ENCODE measurements at regions of chr16 and their contacts with region 1.

Region 1: DNA sequence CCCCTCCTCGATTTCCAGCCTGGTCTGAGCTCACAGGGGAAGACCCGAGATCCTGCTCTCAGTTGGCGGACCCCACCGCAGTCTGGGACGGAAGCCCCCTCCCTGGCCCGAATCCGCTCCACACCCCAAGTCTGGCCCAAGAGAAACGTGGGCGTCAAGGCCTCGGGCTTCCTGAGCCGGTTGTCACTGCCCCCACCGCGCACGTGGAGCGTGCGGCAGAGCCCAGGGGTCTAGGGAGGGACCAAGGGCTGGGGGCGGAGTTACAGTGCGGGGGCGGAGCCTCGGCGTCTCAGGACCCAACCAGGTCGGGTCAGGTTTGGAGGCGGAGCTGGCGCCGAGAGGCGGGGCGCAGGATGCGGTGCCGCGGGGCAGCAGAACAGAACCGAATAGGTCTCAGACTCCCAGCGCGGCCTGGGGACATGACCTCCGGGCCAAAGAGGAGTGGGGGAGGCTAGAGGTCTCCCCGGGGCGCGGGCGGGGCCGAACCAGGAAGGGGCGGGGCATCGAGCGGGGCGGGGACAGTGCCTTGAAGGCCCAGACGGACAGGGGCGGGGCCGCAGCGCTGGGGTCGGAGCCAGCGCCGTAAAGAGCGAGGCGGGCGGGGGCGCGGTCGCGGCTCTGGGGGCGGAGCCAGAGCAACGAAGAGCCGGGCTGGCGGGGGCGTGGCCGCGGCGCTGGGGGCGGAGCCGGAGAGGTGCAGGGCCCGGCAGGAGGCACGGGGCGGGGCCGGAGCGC is 431 bp upstream of the ZFPM1 start:
- DNase-seq: peak; percentile 100
- H3K4me3 Mint-ChIP-seq: peak overlapping the region; percentile 88
- H3K27ac Mint-ChIP-seq: peak overlapping the region; percentile 85
- H3K4me1 Mint-ChIP-seq: peaks cover 27% of the 10 kb centered on the region
- H3K27me3 Mint-ChIP-seq: peaks cover 11% of the 10 kb centered on the region

Region 2: GRCh38 chr16:87387942-87388817 is 1064.5 kb before region 1 on chr16:
- intact Hi-C with region 1: loop called (anchors 10 kb)
- DNase-seq: peak; percentile 96
- H3K4me3 Mint-ChIP-seq: peak overlapping the region; percentile 44
- H3K27ac Mint-ChIP-seq: peak overlapping the region; percentile 96
- H3K4me1 Mint-ChIP-seq: peaks cover 40% of the 10 kb centered on the region
- H3K27me3 Mint-ChIP-seq: peaks cover 2% of the 10 kb centered on the region

Region 3: DNA sequence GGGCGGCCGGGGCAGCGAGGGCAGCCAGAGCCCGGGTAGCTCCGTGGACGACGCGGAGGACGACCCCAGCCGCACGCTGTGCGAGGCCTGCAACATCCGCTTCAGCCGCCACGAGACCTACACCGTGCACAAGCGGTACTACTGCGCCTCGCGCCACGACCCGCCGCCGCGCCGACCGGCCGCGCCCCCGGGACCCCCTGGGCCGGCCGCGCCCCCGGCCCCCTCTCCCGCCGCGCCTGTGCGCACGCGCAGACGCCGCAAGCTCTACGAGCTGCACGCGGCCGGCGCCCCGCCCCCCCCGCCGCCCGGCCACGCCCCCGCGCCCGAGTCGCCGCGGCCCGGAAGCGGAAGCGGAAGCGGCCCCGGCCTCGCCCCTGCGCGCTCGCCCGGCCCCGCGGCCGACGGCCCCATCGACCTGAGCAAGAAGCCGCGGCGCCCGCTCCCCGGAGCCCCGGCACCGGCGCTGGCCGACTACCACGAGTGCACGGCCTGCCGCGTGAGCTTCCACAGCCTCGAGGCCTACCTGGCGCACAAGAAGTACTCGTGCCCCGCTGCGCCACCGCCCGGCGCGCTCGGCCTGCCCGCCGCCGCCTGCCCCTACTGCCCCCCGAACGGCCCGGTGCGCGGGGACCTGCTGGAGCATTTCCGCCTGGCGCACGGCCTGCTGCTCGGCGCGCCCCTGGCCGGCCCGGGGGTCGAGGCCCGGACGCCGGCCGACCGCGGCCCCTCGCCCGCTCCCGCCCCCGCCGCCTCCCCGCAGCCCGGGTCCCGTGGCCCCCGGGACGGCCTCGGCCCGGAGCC is 81.5 kb after region 1 on chr16:
- intact Hi-C with region 1: loop called (anchors 5 kb)
- DNase-seq: peak; percentile 94
- H3K4me3 Mint-ChIP-seq: peak overlapping the region; percentile 35
- H3K27ac Mint-ChIP-seq: no peak overlapping the region
- H3K4me1 Mint-ChIP-seq: peaks cover 3% of the 10 kb centered on the region
- H3K27me3 Mint-ChIP-seq: peaks cover under 1% of the 10 kb centered on the region

Region 4: GRCh38 chr16:88662843-88663606 is 210.4 kb after region 1 on chr16 and contains the start of gene MVD:
- intact Hi-C with region 1: loop called (anchors 10 kb)
- DNase-seq: peak; percentile 99
- H3K4me3 Mint-ChIP-seq: peak within 1 kb of the TSS; percentile 97
- H3K27ac Mint-ChIP-seq: peak within 1 kb of the TSS; percentile 93
- H3K4me1 Mint-ChIP-seq: peaks cover 23% of the 10 kb centered on the region
- H3K27me3 Mint-ChIP-seq: no peaks in the 10 kb centered on the region
- total RNA-seq, gene MVD: 95.7 and 102 TPM in 2 replicates

Region 5: DNA sequence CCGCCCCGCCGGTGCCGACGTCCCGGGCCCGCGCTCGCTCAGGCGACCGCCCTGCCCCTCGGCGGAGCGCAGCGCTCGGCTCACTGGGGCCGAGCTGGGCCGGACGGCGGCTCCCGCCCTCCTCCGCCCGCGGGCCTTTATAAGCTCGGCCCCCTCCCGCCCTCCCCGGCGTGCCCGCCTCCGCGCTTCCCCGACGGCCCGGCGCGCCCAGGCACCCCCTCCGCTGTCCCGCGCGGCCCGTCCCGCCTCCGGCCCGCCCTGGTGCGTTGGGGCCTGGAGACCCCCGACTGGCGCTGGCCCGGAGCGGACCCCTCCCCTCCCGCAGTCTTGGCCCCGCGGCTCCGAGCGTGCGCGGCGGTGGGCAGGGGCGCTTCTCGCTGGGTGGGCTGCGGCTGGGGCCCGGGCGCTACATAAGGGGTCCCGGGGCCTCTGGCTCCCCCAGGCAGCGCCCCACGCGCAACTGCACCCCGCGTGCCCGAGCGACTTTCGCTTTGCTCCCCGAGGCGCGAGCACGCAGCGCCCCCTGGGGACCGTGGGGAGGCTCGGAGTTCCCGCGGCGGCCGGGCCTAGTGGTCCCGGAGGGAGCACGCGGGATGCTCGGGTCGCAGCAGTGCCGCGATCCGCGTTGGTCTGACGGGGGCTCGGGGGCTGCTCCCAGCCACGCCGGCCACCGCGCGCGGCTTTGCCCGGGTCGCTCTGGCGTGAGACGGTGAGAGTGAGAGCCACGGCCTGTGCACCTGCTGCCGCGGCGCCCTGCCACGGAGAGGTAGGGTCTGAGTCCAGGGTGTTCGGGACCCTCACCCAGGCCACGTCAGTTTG is 332.7 kb after region 1 on chr16 and contains the start of gene PIEZO1:
- intact Hi-C with region 1: loop called (anchors 10 kb)
- DNase-seq: peak; percentile 96
- H3K4me3 Mint-ChIP-seq: peak within 1 kb of the TSS; percentile 81
- H3K27ac Mint-ChIP-seq: peak within 1 kb of the TSS; percentile 81
- H3K4me1 Mint-ChIP-seq: peaks cover 43% of the 10 kb centered on the region
- H3K27me3 Mint-ChIP-seq: no peaks in the 10 kb centered on the region
- total RNA-seq, gene PIEZO1: 219 and 226 TPM in 2 replicates

Measured in activated CD4-positive, alpha-beta T cell treated with anti-CD3 and anti-CD28 coated beads, Interleukin-2, amount 10 ng/mL, durations not matched to agents 24 days and 14 days (primary cell).